ENCODE measurements at regions of chr2 and their contacts with region 1.

Region 1: GRCh38 chr2:173210270-173211196 is 134.9 kb downstream of the MAP3K20 start:
- DNase-seq: peak; percentile 68
- H3K4me3 ChIP-seq: no peak overlapping the region
- H3K27me3 ChIP-seq: no peaks in the 10 kb centered on the region
- CTCF ChIP-seq: peak; percentile 87

Region 2: DNA sequence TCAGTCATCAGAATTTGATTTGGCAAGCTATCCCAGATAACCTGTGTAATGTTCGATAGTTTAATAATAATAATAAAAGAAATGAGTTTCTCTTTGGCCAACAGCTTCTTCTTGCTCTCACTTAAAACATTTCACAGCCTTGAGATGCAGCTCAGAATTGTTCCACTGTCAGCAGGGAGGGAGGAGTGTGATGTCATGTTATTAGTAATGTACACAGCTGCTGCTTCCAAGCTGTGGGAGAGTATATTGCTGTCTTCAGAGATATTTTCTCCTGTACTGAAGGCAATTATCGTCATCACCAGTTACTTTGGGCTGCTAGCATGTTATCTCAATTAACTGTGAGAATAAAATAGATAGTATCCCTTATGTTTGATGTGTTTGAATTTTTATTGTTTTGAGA is 281.8 kb before region 1 on chr2:
- CTCF ChIA-PET with region 1: no interaction called
- POLR2A ChIA-PET with region 1: no interaction called
- DNase-seq: no peak
- H3K4me3 ChIP-seq: no peak overlapping the region
- H3K27me3 ChIP-seq: no peaks in the 10 kb centered on the region
- CTCF ChIP-seq: no peak

Region 3: GRCh38 chr2:172962824-172963223 is 247.7 kb before region 1 on chr2:
- CTCF ChIA-PET with region 1: no interaction called
- POLR2A ChIA-PET with region 1: no interaction called
- DNase-seq: no peak
- H3K4me3 ChIP-seq: no peak overlapping the region
- H3K27me3 ChIP-seq: no peaks in the 10 kb centered on the region
- CTCF ChIP-seq: no peak

Region 4: DNA sequence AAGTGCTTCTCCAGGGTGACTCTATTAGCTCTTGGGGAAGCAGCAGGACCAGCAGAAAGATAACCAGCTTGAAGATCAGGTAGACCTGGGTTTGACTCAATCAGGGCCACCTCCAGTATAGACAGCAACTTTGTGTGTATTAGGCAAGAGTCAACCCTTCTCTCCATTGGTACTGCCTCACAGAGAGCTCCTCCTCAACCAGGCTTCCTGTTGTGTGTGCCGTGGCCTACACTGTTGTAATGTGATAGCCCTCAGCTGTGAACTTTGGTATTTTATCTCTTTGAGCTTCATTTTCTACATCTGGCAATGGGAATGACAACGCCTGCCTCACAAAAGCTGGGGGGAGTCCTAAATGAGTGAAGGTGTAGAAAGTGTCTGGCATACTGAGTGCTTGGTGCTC is 151.9 kb before region 1 on chr2:
- CTCF ChIA-PET with region 1: interaction called, 10 read pairs
- POLR2A ChIA-PET with region 1: no interaction called
- DNase-seq: no peak
- H3K4me3 ChIP-seq: no peak overlapping the region
- H3K27me3 ChIP-seq: no peaks in the 10 kb centered on the region
- CTCF ChIP-seq: no peak

Region 5: GRCh38 chr2:173075781-173076580 is 134.6 kb before region 1 on chr2 and contains the start of gene MAP3K20:
- CTCF ChIA-PET with region 1: interaction called, 14 read pairs
- POLR2A ChIA-PET with region 1: interaction called, 3 read pairs
- DNase-seq: no peak
- H3K4me3 ChIP-seq: peak within 1 kb of the TSS; percentile 77
- H3K27me3 ChIP-seq: no peaks in the 10 kb centered on the region
- CTCF ChIP-seq: peak; percentile 47
- polyA plus RNA-seq, gene MAP3K20: 45.4 and 76.7 TPM in 2 replicates

Region 6: GRCh38 chr2:173199294-173199693 is 11.2 kb before region 1 on chr2:
- CTCF ChIA-PET with region 1: interaction called, 19 read pairs
- POLR2A ChIA-PET with region 1: no interaction called
- DNase-seq: no peak
- H3K4me3 ChIP-seq: no peak overlapping the region
- H3K27me3 ChIP-seq: no peaks in the 10 kb centered on the region
- CTCF ChIP-seq: no peak